Adrenal gland (tissue), 19 donors: ENCODE measurements at regions of chr1 and their contacts with region 1.

Region 1: DNA sequence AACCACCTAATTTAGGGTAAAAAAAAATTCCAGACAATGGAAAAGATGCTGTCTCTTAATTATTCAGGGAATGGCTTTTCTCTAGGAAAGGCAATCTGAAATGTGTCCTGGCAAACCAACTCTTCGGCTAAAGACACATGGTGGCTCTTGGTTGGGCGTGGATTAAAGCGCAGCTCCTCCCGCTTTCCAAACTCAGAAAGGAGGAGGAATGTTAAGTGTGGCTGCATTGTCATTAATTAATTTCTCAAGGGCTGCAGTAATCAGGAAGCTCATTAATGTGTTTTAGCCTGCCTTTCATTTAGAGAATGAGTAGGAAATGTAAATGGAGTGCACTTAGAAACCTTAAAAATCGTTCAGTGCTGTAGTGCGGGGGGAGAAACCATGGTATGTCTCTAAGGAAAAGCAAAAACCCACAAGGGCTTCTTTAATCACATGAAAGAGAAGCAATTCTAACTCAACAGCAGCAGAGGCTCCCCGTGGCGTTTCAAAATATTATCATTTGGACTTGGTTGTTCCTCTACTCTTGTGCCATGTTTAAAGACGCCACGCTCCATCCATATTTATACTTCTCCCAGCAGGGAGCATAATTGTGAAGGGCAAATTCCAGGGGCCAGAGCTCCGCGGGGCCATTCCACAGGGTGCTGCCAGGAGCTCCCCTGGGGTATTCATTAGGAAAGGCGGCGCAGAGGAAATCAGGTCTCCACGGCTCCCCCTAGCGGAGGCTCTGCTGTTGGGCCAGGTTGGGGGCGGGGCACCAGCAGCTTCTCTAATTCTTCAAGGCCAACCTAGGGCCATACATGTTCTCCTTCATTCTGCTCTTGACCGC is 91.9 kb upstream of the SSX2IP start:
- DNase-seq: peak; percentile 33 to 80 (median 57)
- H3K4me3 ChIP-seq: no peak overlapping the region
- H3K27ac ChIP-seq: no peak overlapping the region
- H3K4me1 ChIP-seq: peaks cover 0 to 5% of the 10 kb centered on the region in 2 donors
- H3K27me3 ChIP-seq: no peaks in the 10 kb centered on the region
- CTCF ChIP-seq: peak in 5 of 6 experiments; percentile 31 to 51 (median 39)
- POLR2A ChIP-seq: no peak

Region 2: DNA sequence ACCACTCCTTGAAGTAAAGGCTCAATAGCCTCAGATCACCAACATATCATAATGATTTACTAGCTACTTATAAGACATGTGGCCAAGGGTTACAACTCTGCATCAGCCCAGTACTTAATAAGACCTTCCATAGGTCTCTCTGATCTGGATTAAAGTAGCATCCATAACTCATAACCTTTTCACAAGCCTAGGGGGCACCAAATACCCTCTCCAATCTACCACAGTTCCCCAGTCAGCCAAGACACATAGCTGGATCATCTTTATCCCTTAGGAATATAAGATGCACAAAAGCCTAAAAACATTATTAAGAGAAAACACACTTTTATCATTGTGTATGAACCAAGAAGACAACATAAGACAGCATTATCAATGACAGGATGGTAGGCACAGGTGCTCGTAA is 114.0 kb before region 1 on chr1:
- intact Hi-C with region 1: no loop called
- DNase-seq: no peak
- H3K4me3 ChIP-seq: no peak overlapping the region
- H3K27ac ChIP-seq: no peak overlapping the region
- H3K4me1 ChIP-seq: no peaks in the 10 kb centered on the region
- H3K27me3 ChIP-seq: no peaks in the 10 kb centered on the region
- CTCF ChIP-seq: no peak
- POLR2A ChIP-seq: no peak

Region 3: DNA sequence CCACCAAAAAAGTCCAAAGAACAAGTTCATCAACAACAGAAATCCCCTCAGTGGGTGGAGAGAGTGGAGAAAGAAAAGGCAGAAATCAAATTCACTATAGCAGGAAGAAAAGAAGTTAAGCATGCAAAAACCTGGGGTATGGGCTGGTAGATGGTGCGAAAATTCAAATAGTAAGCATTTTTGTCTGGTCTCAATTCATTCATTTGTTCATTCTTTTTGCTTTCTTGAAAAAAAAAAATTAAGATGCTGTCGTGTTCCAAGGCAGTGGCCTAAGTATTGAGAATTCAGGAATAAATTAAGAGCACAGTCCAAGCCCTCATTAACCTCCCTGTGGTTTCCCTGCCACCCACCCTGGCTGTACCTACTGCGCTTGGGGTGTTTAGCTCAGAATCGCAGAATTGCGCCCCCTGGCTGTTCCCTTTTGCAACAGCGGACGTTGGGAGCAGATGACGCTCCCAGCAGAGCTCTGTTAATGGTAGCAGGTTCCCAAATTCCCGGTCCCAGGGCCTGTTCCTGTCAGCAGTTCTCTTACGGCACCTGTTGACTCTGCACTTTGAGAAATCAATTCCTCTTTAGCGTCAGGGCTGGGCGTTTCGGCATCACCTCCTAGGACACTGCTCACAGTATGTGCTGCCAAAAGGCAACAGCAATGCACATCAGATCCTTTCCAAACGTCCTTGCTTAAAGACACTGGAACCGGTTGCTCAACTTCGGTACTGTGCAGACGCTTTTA is 57.9 kb before region 1 on chr1:
- intact Hi-C with region 1: no loop called
- DNase-seq: peak in 1 of 7 donors; percentile 21
- H3K4me3 ChIP-seq: no peak overlapping the region
- H3K27ac ChIP-seq: no peak overlapping the region
- H3K4me1 ChIP-seq: peaks cover 0 to 6% of the 10 kb centered on the region in 2 donors
- H3K27me3 ChIP-seq: no peaks in the 10 kb centered on the region
- CTCF ChIP-seq: peak in 1 of 6 experiments; percentile 29
- POLR2A ChIP-seq: no peak

Region 4: DNA sequence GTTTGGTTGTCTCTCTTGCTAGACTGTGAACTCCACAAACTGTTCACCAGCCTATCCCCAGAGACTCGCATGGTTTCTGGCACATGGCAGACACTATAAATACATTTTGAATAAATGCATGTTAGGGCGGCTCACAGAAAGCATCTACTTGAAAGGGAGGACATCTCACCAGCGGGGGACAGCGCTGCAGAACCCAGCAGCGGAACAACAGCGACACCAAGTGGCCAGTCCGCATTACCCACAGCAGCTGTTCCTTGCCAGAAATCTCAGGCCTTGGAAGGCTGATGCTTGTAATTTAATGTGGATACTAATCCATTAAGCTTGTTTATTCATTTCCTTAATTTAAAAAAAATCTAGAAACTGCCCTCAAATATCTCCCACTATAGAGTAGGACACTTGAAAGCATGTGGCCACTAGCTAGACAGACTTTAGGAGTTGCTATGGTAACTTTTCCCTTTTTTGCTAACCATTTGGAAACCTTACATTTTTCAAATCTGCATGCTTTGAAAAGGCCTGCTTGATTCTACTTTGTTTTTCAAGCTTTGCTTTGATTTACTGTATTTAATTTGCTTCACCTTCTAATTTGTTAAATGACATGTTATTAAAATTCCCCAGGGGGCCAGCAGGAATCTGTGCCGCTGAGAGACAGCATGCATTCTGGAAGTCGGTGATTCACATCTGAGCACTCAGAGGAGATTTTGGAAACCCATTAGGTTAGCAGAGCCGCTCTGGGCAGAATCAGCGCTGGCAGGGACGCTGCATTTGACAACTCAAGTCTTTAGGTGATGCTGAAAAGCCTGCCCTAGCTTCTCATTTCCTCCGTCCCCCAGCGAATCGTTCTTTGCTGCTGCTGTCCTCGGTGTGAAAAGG is 28.4 kb before region 1 on chr1:
- intact Hi-C with region 1: no loop called
- DNase-seq: peak; percentile 48 to 85 (median 72)
- H3K4me3 ChIP-seq: no peak overlapping the region
- H3K27ac ChIP-seq: no peak overlapping the region
- H3K4me1 ChIP-seq: peaks cover 0 to under 1% of the 10 kb centered on the region in 2 donors
- H3K27me3 ChIP-seq: peaks cover 9% of the 10 kb centered on the region
- CTCF ChIP-seq: peak; percentile 85 to 98 (median 90)
- POLR2A ChIP-seq: no peak

Region 5: GRCh38 chr1:84836145-84836544 is 54.0 kb after region 1 on chr1:
- intact Hi-C with region 1: no loop called
- DNase-seq: no peak
- H3K4me3 ChIP-seq: no peak overlapping the region
- H3K27ac ChIP-seq: no peak overlapping the region
- H3K4me1 ChIP-seq: no peaks in the 10 kb centered on the region
- H3K27me3 ChIP-seq: no peaks in the 10 kb centered on the region
- CTCF ChIP-seq: no peak
- POLR2A ChIP-seq: no peak

Region 6: GRCh38 chr1:84913555-84913892 is 131.4 kb after region 1 on chr1:
- intact Hi-C with region 1: loop called in 1 of 2 experiments (anchors 10 kb)
- DNase-seq: peak in 6 of 7 donors; percentile 29 to 67 (median 45)
- H3K4me3 ChIP-seq: no peak overlapping the region
- H3K27ac ChIP-seq: no peak overlapping the region
- H3K4me1 ChIP-seq: peaks cover 8 to 11% of the 10 kb centered on the region in 2 donors
- H3K27me3 ChIP-seq: no peaks in the 10 kb centered on the region
- CTCF ChIP-seq: no peak
- POLR2A ChIP-seq: no peak